ENCODE measurements at regions of chr11 and their contacts with region 1.

Region 1: GRCh38 chr11:128716661-128717210 is 22.9 kb downstream of the FLI1 start:
- DNase-seq: peak in 1 of 2 experiments; percentile 59
- H3K4me3 ChIP-seq: no peak overlapping the region
- H3K27ac ChIP-seq: no peak overlapping the region
- H3K4me1 ChIP-seq: no peaks in the 10 kb centered on the region
- H3K27me3 ChIP-seq: no peaks in the 10 kb centered on the region
- CTCF ChIP-seq: no peak

Region 2: GRCh38 chr11:128290106-128290840 is 426.5 kb before region 1 on chr11:
- CTCF ChIA-PET with region 1: no interaction called
- POLR2A ChIA-PET with region 1: no interaction called
- intact Hi-C with region 1: loop called (anchors 1 kb)
- DNase-seq: peak; percentile 45 to 58
- H3K4me3 ChIP-seq: no peak overlapping the region
- H3K27ac ChIP-seq: no peak overlapping the region
- H3K4me1 ChIP-seq: peaks cover 18% of the 10 kb centered on the region
- H3K27me3 ChIP-seq: no peaks in the 10 kb centered on the region
- CTCF ChIP-seq: peak; percentile 93

Region 3: DNA sequence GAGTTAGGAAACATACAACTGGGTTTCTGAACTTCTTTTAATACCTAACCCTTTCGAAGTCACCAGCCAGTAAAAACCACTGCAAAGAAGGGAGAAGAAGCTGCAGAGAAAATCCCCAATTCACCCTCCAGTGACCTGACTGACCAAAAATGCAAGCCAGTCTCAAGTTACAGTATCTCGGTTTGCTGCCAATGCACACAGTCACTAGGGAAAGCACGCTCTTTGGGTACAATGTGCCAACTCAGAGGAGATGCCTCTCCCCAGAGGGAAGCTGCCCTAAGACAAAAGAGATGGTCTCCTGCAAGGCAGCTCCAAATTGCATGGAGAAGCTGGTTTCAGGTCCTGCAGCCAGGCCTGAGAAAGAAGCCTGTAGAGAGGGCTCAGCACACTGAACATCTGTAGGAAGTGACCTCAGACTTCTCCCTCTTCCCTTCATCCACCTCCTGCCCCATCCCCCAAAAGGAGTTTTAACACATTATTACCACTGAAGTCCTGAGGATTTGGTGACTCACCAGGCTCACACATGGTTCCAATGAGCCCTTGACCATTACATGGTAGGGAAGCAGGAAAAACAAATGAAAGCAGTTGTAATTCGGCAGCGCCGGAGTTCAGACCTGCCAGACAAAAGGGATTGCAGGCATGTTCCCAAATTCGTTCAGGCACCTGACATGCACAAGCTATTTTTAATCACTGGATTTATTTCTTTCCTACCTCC is 219.5 kb before region 1 on chr11:
- CTCF ChIA-PET with region 1: no interaction called
- POLR2A ChIA-PET with region 1: no interaction called
- intact Hi-C with region 1: loop called (anchors 10 kb)
- DNase-seq: peak; percentile 80 to 97
- H3K4me3 ChIP-seq: peak overlapping the region; percentile 49; the same call in 1 of the 2 replicates
- H3K27ac ChIP-seq: peak overlapping the region; percentile 99
- H3K4me1 ChIP-seq: peaks cover 79% of the 10 kb centered on the region
- H3K27me3 ChIP-seq: no peaks in the 10 kb centered on the region
- CTCF ChIP-seq: no peak

Measured in PC-9 (cell line).